HepG2 (cell line): ENCODE measurements at regions of chr6 and their contacts with region 1.

Region 1: GRCh38 chr6:53986165-53986720 is 125.0 kb upstream of the MLIP start:
- DNase-seq: peak; percentile 46
- ATAC-seq: peak; percentile 86
- H3K4me3 ChIP-seq: no peak overlapping the region
- H3K27ac ChIP-seq: no peak overlapping the region
- H3K4me1 ChIP-seq: no peaks in the 10 kb centered on the region
- H3K27me3 ChIP-seq: no peaks in the 10 kb centered on the region
- CTCF ChIP-seq: peak; percentile 82
- EP300 ChIP-seq: no peak
- POLR2A ChIP-seq: no peak
- RAD21 ChIP-seq: peak; percentile 82

Region 2: DNA sequence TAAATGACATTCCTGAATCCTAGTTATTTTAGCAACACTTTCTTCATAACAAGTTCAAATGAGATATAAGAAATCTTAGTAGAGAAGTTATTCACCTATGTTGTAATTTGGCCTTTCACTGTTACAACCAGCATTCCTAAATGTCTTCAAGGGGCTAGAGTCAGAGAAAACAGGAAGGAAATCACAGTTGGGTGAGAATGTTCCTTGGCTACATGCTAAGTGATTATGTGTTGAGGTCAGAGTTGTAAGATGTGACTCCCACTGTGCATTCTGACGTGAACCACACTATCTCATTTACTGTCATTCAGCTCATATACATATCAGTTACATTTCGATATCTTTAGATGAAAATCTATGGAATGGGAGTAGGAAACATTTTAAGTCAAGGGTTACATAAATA is 74.0 kb after region 1 on chr6:
- CTCF ChIA-PET with region 1: no interaction called
- POLR2A ChIA-PET with region 1: no interaction called
- in situ Hi-C with region 1: no loop called
- intact Hi-C with region 1: no loop called
- DNase-seq: no peak
- ATAC-seq: no peak
- H3K4me3 ChIP-seq: no peak overlapping the region
- H3K27ac ChIP-seq: no peak overlapping the region
- H3K4me1 ChIP-seq: peaks cover 9% of the 10 kb centered on the region
- H3K27me3 ChIP-seq: no peaks in the 10 kb centered on the region
- CTCF ChIP-seq: no peak
- EP300 ChIP-seq: no peak
- POLR2A ChIP-seq: no peak
- RAD21 ChIP-seq: no peak

Region 3: GRCh38 chr6:54244430-54244829 is 258.2 kb after region 1 on chr6:
- CTCF ChIA-PET with region 1: no interaction called
- POLR2A ChIA-PET with region 1: no interaction called
- in situ Hi-C with region 1: no loop called
- intact Hi-C with region 1: loop called (anchors 1 kb)
- DNase-seq: peak; percentile 18
- ATAC-seq: no peak
- H3K4me3 ChIP-seq: no peak overlapping the region
- H3K27ac ChIP-seq: no peak overlapping the region
- H3K4me1 ChIP-seq: no peaks in the 10 kb centered on the region
- H3K27me3 ChIP-seq: no peaks in the 10 kb centered on the region
- CTCF ChIP-seq: peak; percentile 25; the same call in 1 of the 2 replicates
- EP300 ChIP-seq: no peak
- POLR2A ChIP-seq: no peak
- RAD21 ChIP-seq: no peak

Region 4: GRCh38 chr6:54717849-54718455 is 731.7 kb after region 1 on chr6:
- CTCF ChIA-PET with region 1: interaction called, 4 read pairs
- POLR2A ChIA-PET with region 1: no interaction called
- in situ Hi-C with region 1: loop called (anchors 25 kb)
- intact Hi-C with region 1: loop called (anchors 10 kb)
- DNase-seq: peak; percentile 77
- ATAC-seq: peak; percentile 92
- H3K4me3 ChIP-seq: no peak overlapping the region
- H3K27ac ChIP-seq: no peak overlapping the region
- H3K4me1 ChIP-seq: no peaks in the 10 kb centered on the region
- H3K27me3 ChIP-seq: no peaks in the 10 kb centered on the region
- CTCF ChIP-seq: peak; percentile 76
- EP300 ChIP-seq: no peak
- POLR2A ChIP-seq: no peak
- RAD21 ChIP-seq: no peak; the same call in 1 of the 2 replicates

Region 5: DNA sequence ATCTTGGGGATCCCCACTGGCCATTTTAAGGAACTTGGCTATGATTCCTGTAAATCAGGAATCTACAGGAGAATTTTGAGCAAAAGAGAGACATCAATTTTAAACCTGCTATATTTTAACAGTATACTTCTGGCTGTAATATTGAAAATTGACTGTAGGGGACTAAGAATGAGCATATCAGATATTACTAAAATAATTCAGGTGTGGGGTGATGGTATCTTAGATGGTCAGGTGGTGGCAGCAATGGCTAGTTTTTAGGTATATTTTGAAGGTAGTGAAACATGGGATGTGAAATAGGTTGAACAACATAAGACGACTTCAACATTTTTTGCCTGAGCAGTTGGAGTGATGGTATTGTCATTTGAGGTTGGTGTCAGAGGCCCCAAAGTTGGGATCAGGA is 892.4 kb after region 1 on chr6:
- CTCF ChIA-PET with region 1: no interaction called
- POLR2A ChIA-PET with region 1: no interaction called
- in situ Hi-C with region 1: no loop called
- intact Hi-C with region 1: loop called (anchors 2 kb)
- DNase-seq: peak; percentile 28
- ATAC-seq: peak; percentile 79
- H3K4me3 ChIP-seq: no peak overlapping the region
- H3K27ac ChIP-seq: no peak overlapping the region
- H3K4me1 ChIP-seq: no peaks in the 10 kb centered on the region
- H3K27me3 ChIP-seq: no peaks in the 10 kb centered on the region
- CTCF ChIP-seq: peak; percentile 55
- EP300 ChIP-seq: no peak
- POLR2A ChIP-seq: no peak
- RAD21 ChIP-seq: 0 out of 2 replicates have a peak, but pooled peaks have one; percentile 40

Region 6: GRCh38 chr6:55069132-55069781 is 1083.0 kb after region 1 on chr6:
- CTCF ChIA-PET with region 1: interaction called, 4 read pairs
- POLR2A ChIA-PET with region 1: no interaction called
- in situ Hi-C with region 1: loop called (anchors 10 kb)
- intact Hi-C with region 1: loop called (anchors 1 kb)
- DNase-seq: peak; percentile 49
- ATAC-seq: peak; percentile 69
- H3K4me3 ChIP-seq: no peak overlapping the region
- H3K27ac ChIP-seq: no peak overlapping the region
- H3K4me1 ChIP-seq: no peaks in the 10 kb centered on the region
- H3K27me3 ChIP-seq: no peaks in the 10 kb centered on the region
- CTCF ChIP-seq: peak; percentile 72
- EP300 ChIP-seq: no peak
- POLR2A ChIP-seq: no peak
- RAD21 ChIP-seq: peak; percentile 32; the same call in 1 of the 2 replicates